Kidney (tissue), 22 donors: ENCODE measurements at regions of chr19 and their contacts with region 1.

Region 1: DNA sequence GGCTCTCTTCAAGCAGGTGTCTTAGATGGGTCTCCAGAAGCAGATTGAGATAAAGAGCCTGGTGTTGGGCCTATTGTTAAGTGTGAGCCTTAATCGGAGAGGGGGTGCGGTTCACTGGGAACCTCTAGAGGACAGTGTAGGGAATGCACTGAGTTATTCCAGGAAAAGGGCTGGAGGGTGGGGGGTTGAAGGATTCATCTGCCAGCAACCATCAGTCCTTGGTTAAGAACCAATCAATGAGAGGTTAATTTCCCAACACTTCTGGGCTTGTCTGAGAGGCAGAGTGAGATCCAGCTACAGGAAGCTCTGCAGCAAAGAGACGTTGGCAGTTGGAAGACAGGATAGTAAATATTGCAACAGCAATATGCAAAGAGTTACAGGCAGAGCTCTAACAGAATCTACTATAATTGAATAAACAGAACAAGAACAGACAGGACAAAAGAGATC is 28.7 kb downstream of the CYP4F2 start:
- DNase-seq: peak in 3 of 5 donors; percentile 14 to 32 (median 22)
- H3K4me3 ChIP-seq: no peak overlapping the region
- H3K27ac ChIP-seq: no peak overlapping the region
- H3K4me1 ChIP-seq: no peaks in the 10 kb centered on the region
- H3K27me3 ChIP-seq: no peaks in the 10 kb centered on the region
- CTCF ChIP-seq: peak; percentile 55

Region 2: GRCh38 chr19:15629003-15629880 is 239.9 kb before region 1 on chr19:
- intact Hi-C with region 1: loop called (anchors 10 kb)
- DNase-seq: peak; percentile 45 to 89 (median 66)
- H3K4me3 ChIP-seq: no peak overlapping the region
- H3K27ac ChIP-seq: no peak overlapping the region
- H3K4me1 ChIP-seq: peaks cover 0 to 2% (median 0%) of the 10 kb centered on the region in 3 donors
- H3K27me3 ChIP-seq: no peaks in the 10 kb centered on the region
- CTCF ChIP-seq: peak; percentile 87